ENCODE measurements at regions of chr11 and their contacts with region 1.

Region 1: GRCh38 chr11:67545280-67545679 is 22.0 kb upstream of the CABP2 start:
- DNase-seq: peak; percentile 49 to 89 (median 72)
- ATAC-seq: peak; percentile 98
- H3K4me3 ChIP-seq: no peak overlapping the region
- H3K27ac ChIP-seq: no peak overlapping the region
- H3K4me1 ChIP-seq: peaks cover 11 to 14% of the 10 kb centered on the region in 2 experiments; a peak in 4 of 5 replicates
- H3K27me3 ChIP-seq: no peaks in the 10 kb centered on the region
- CTCF ChIP-seq: peak; percentile 40 to 46 (median 43)
- EP300 ChIP-seq: no peak
- POLR2A ChIP-seq: no peak
- RAD21 ChIP-seq: 0 out of 4 replicates have a peak, but pooled peaks of 1 of the 2 experiments have one; percentile 20

Region 2: GRCh38 chr11:67534070-67534679 is 11.1 kb before region 1 on chr11:
- CTCF ChIA-PET with region 1: no interaction called
- POLR2A ChIA-PET with region 1: interaction called, 10 read pairs
- in situ Hi-C with region 1: no loop called
- intact Hi-C with region 1: no loop called
- DNase-seq: no peak
- ATAC-seq: no peak
- H3K4me3 ChIP-seq: no peak overlapping the region
- H3K27ac ChIP-seq: no peak overlapping the region
- H3K4me1 ChIP-seq: peaks cover 6 to 17% of the 10 kb centered on the region in 2 experiments; a peak in 3 of 5 replicates
- H3K27me3 ChIP-seq: no peaks in the 10 kb centered on the region
- CTCF ChIP-seq: no peak
- EP300 ChIP-seq: no peak
- POLR2A ChIP-seq: no peak
- RAD21 ChIP-seq: no peak

Region 3: GRCh38 chr11:68677432-68677831 is 1132.2 kb after region 1 on chr11:
- CTCF ChIA-PET with region 1: no interaction called
- POLR2A ChIA-PET with region 1: no interaction called
- in situ Hi-C with region 1: loop called (anchors 25 kb)
- intact Hi-C with region 1: no loop called
- DNase-seq: peak; percentile 66 to 82 (median 77)
- ATAC-seq: peak; percentile 87
- H3K4me3 ChIP-seq: no peak overlapping the region
- H3K27ac ChIP-seq: no peak overlapping the region
- H3K4me1 ChIP-seq: peaks cover 0 to 10% of the 10 kb centered on the region in 2 experiments; a peak in 3 of 5 replicates
- H3K27me3 ChIP-seq: peaks cover 16 to 24% of the 10 kb centered on the region in 2 experiments; a peak in 4 of 5 replicates
- CTCF ChIP-seq: no peak
- EP300 ChIP-seq: no peak
- POLR2A ChIP-seq: no peak
- RAD21 ChIP-seq: no peak

Measured in K562 (cell line).